ENCODE measurements at regions of chr19 and their contacts with region 1.

Region 1: GRCh38 chr19:15264061-15264932 is 32.0 kb upstream of the EPHX3 start:
- DNase-seq: peak; percentile 70 to 86 (median 75)
- ATAC-seq: peak in 3 of 4 donors; percentile 24 to 46 (median 25)
- H3K4me3 ChIP-seq: no peak overlapping the region
- H3K27ac ChIP-seq: peak overlapping the region in 11 of 12 donors; percentile 3 to 84 (median 55)
- H3K4me1 ChIP-seq: peaks cover 3 to 59% (median 52%) of the 10 kb centered on the region in 12 donors
- H3K27me3 ChIP-seq: no peaks in the 10 kb centered on the region
- CTCF ChIP-seq: peak; percentile 68 to 85 (median 78)
- POLR2A ChIP-seq: no peak

Region 2: GRCh38 chr19:14674764-14675163 is 589.5 kb before region 1 on chr19 and contains the start of gene ADGRE3:
- intact Hi-C with region 1: no loop called
- DNase-seq: no peak
- ATAC-seq: no peak
- H3K4me3 ChIP-seq: peak within 1 kb of the TSS in 1 of 12 donors; percentile 27
- H3K27ac ChIP-seq: peak within 1 kb of the TSS in 2 of 12 donors; percentile 1 to 34
- H3K4me1 ChIP-seq: peaks cover 0 to 13% (median 0%) of the 10 kb centered on the region in 12 donors
- H3K27me3 ChIP-seq: peaks cover 0 to 38% (median 5%) of the 10 kb centered on the region in 9 donors
- CTCF ChIP-seq: no peak
- POLR2A ChIP-seq: no peak
- total RNA-seq, gene ADGRE3: 0.25 to 0.59 (median 0.53) TPM in 3 of 9 donors, not detected in the others

Region 3: DNA sequence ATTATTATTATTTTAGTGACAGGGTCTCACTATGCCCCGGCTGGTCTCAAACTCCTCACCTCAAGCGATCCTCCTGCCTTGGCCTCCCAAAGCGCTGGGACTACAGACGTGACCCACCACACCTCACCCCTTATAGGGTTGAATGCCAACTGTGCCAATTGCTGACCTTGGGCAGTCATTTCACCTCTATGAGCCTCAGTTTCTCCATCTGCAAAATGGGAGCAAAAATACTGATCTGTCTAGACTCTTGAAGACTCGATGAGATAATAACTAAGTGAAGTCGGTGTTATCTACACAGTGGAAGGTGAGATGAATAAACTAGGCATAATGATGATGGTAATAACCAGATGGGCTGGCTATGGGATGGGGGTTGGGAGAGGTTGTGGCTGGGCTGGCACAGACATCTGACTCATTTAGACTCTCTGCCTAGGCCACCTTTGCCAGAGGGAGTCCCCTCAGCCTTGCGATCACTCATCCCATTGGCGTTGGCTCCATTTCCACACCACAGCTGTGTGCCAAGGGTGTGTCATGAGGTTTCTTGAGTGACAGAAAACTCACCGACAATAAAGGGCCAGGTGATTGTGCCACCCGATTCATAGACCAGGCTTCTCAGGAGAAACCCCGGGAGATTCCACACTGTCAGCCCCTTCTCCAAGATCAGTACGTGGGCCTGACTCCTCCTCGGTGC is 215.3 kb before region 1 on chr19 and contains the start of gene CASP14:
- intact Hi-C with region 1: no loop called
- DNase-seq: no peak
- ATAC-seq: no peak
- H3K4me3 ChIP-seq: no peak within 1 kb of the TSS
- H3K27ac ChIP-seq: no peak within 1 kb of the TSS
- H3K4me1 ChIP-seq: no peaks in the 10 kb centered on the region
- H3K27me3 ChIP-seq: peaks cover 0 to 21% (median 3%) of the 10 kb centered on the region in 9 donors
- CTCF ChIP-seq: no peak
- POLR2A ChIP-seq: no peak
- total RNA-seq, gene CASP14: not detected

Region 4: GRCh38 chr19:15101479-15102082 is 162.7 kb before region 1 on chr19:
- intact Hi-C with region 1: loop called in 4 of 10 experiments (anchors 10 kb)
- DNase-seq: no peak
- ATAC-seq: peak in 3 of 4 donors; percentile 53 to 75 (median 71)
- H3K4me3 ChIP-seq: no peak overlapping the region
- H3K27ac ChIP-seq: no peak overlapping the region
- H3K4me1 ChIP-seq: peaks cover 0 to 6% (median under 1%) of the 10 kb centered on the region in 12 donors
- H3K27me3 ChIP-seq: no peaks in the 10 kb centered on the region
- CTCF ChIP-seq: peak; percentile 63 to 79 (median 70)
- POLR2A ChIP-seq: no peak

Region 5: DNA sequence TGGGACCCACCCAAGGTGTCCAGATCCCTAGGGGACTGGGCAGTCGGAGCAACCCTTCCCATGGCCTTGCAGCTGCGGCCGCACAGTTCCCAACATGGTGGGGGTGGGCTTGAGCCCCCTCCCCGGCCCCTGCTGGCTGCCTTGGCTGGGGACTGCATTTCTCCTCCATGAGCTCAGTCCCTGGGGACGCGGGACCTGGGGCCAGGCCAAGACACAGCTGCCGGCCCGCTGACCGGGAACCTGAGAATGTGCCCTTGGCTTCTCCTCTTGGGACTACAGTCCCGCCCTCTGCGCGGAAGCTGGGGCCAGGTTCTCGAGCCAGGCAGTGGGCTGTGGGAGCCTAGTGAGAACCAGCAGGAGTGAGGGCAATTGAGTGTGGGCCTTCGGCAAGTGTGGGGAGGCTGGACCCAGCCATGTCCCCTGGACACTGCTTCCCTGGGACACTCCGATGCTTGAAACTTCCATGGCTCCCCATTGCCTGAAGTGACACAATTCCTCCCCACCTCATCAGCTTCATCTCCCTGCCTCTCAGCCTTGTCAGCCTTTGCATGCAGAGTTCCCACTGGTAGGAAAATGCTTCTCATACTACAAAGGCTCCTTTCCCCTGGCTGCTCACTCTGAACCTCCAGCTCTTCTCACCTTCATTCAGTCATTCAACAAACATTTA is 50.4 kb before region 1 on chr19:
- intact Hi-C with region 1: no loop called
- DNase-seq: peak; percentile 87 to 91 (median 88)
- ATAC-seq: peak; percentile 62 to 90 (median 80)
- H3K4me3 ChIP-seq: no peak overlapping the region
- H3K27ac ChIP-seq: peak overlapping the region in 10 of 12 donors; percentile 20 to 78 (median 56)
- H3K4me1 ChIP-seq: peaks cover 0 to 26% (median 6%) of the 10 kb centered on the region in 12 donors
- H3K27me3 ChIP-seq: no peaks in the 10 kb centered on the region
- CTCF ChIP-seq: no peak
- POLR2A ChIP-seq: no peak

Region 6: GRCh38 chr19:15323496-15324227 is 59.4 kb after region 1 on chr19:
- intact Hi-C with region 1: loop called in 1 of 10 experiments (anchors 5 kb)
- DNase-seq: peak in 2 of 5 donors; percentile 67 to 68
- ATAC-seq: peak; percentile 64 to 80 (median 76)
- H3K4me3 ChIP-seq: no peak overlapping the region
- H3K27ac ChIP-seq: peak overlapping the region in 9 of 12 donors; percentile 25 to 75 (median 59)
- H3K4me1 ChIP-seq: peaks cover 19 to 99% (median 95%) of the 10 kb centered on the region in 12 donors
- H3K27me3 ChIP-seq: no peaks in the 10 kb centered on the region
- CTCF ChIP-seq: no peak
- POLR2A ChIP-seq: no peak

Region 7: DNA sequence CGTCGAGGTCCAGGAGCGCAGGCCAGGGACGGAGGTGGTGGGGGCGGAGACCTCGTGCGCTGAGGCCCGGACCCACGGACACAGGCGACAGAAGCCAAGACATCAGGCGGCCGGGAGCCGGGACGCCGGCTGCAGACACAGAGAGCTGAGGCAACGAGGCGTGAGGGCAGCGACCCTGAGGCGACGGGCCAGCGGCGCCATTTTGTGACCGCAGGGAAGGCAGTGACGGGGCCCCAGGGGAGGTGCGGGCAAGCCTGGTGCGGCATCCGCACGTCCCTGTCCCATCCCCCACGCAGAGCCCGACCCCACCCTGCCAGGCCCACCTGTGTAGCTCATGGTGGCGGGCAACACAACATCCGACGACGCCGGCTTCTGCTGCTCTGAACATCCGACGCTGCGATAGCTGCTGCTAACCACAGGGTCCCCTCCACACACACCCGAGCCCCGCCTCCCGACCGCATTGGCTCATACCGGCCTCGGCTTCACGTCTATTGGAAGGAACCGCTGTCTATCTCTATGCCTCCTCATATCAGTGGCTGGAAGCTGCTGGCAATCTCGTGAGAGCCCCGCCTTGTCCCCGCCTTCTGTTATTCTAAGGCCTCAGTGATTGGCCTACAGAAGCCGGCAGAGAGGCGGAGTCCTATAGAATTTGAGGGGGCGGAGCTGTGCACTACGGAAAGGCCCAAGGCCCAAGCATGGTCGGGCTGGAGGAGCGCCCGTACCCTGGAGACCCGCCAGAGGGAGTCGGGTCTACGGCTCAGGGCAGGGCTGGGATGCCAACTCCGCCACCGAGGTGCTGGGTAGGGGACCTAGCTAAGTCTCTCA is 154.5 kb after region 1 on chr19 and contains the start of gene AKAP8L:
- intact Hi-C with region 1: loop called in 1 of 10 experiments (anchors 10 kb)
- DNase-seq: peak; percentile 98 to 100 (median 99)
- ATAC-seq: peak; percentile 95 to 98 (median 96)
- H3K4me3 ChIP-seq: peak within 1 kb of the TSS; percentile 75 to 100 (median 93)
- H3K27ac ChIP-seq: peak within 1 kb of the TSS; percentile 71 to 95 (median 91)
- H3K4me1 ChIP-seq: peaks cover 6 to 58% (median 39%) of the 10 kb centered on the region in 12 donors
- H3K27me3 ChIP-seq: no peaks in the 10 kb centered on the region
- CTCF ChIP-seq: peak; percentile 50 to 81 (median 63)
- POLR2A ChIP-seq: peak; percentile 53 to 91
- total RNA-seq, gene AKAP8L: 46.5 to 72.2 (median 60.1) TPM

Region 8: DNA sequence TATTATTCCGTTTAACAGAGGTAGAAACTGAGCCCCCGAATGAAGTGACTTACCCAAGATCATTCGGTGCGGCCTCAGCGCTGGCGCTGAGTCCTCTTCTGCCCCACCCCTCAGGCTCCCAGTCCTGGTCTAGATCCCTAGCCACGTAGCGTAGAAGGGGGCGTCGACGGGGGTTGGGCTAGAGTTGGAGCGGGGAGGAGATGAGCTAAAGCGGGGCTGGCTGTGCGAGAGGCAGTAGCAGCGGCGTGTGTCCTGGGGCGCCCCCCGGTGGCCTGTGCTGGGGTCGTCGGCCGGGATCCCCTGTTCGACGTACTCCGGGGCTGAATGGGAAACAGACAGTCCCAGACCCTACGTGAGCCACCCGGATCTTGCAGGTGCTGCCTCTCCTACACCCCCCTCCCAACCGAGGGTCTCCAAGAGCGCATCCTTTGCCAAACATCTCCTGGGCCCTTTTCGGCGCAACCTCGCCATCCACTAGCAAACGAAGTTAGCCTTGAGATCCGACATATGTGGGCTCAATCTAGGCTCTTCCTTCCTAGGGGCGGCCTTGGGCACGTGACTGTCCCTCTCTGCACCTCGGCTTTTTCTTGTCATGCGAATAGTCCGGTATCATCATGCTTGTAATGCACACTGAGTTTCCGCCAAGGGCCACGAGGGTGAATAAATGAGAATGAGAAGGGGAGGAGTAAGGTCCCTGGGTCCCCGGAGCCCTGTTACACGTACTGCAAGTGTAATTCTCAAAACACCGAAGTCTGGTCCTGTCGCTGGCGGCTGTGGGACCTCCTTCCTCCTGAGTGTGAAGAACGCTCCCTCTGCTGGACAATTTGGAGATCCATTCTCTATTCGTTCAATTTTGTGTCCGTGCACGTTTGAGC is 291.7 kb after region 1 on chr19:
- intact Hi-C with region 1: loop called in 6 of 10 experiments (anchors 2 to 10 kb)
- DNase-seq: peak; percentile 86 to 95 (median 91)
- ATAC-seq: peak; percentile 84 to 97 (median 95)
- H3K4me3 ChIP-seq: peak overlapping the region in 9 of 12 donors; percentile 23 to 49 (median 37)
- H3K27ac ChIP-seq: peak overlapping the region in 3 of 12 donors; percentile 12 to 31 (median 26)
- H3K4me1 ChIP-seq: peaks cover 0 to 18% (median 12%) of the 10 kb centered on the region in 12 donors
- H3K27me3 ChIP-seq: peaks cover 0 to 40% (median 9%) of the 10 kb centered on the region in 9 donors
- CTCF ChIP-seq: peak; percentile 66 to 85 (median 76)
- POLR2A ChIP-seq: no peak